SK-N-SH (cell line): ENCODE measurements at regions of chr7 and their contacts with region 1.

Region 1: GRCh38 chr7:2680792-2681490 is 7.1 kb upstream of the AMZ1 start:
- DNase-seq: peak; percentile 94
- H3K4me3 ChIP-seq: no peak overlapping the region; a peak in 1 of 4 replicates
- H3K27ac ChIP-seq: no peak overlapping the region
- H3K4me1 ChIP-seq: peaks cover 0 to 3% of the 10 kb centered on the region in 2 experiments; a peak in 1 of 4 replicates
- H3K27me3 ChIP-seq: peaks cover 11% of the 10 kb centered on the region; the same call in 1 of the 2 replicates
- CTCF ChIP-seq: peak; percentile 76
- EP300 ChIP-seq: no peak
- RAD21 ChIP-seq: peak; percentile 82

Region 2: GRCh38 chr7:2567679-2568278 is 113.2 kb before region 1 on chr7:
- CTCF ChIA-PET with region 1: interaction called, 14 read pairs
- POLR2A ChIA-PET with region 1: no interaction called
- DNase-seq: peak; percentile 69
- H3K4me3 ChIP-seq: no peak overlapping the region
- H3K27ac ChIP-seq: no peak overlapping the region
- H3K4me1 ChIP-seq: no peaks in the 10 kb centered on the region
- H3K27me3 ChIP-seq: no peaks in the 10 kb centered on the region
- CTCF ChIP-seq: peak; percentile 46
- EP300 ChIP-seq: no peak
- RAD21 ChIP-seq: peak; percentile 82

Region 3: DNA sequence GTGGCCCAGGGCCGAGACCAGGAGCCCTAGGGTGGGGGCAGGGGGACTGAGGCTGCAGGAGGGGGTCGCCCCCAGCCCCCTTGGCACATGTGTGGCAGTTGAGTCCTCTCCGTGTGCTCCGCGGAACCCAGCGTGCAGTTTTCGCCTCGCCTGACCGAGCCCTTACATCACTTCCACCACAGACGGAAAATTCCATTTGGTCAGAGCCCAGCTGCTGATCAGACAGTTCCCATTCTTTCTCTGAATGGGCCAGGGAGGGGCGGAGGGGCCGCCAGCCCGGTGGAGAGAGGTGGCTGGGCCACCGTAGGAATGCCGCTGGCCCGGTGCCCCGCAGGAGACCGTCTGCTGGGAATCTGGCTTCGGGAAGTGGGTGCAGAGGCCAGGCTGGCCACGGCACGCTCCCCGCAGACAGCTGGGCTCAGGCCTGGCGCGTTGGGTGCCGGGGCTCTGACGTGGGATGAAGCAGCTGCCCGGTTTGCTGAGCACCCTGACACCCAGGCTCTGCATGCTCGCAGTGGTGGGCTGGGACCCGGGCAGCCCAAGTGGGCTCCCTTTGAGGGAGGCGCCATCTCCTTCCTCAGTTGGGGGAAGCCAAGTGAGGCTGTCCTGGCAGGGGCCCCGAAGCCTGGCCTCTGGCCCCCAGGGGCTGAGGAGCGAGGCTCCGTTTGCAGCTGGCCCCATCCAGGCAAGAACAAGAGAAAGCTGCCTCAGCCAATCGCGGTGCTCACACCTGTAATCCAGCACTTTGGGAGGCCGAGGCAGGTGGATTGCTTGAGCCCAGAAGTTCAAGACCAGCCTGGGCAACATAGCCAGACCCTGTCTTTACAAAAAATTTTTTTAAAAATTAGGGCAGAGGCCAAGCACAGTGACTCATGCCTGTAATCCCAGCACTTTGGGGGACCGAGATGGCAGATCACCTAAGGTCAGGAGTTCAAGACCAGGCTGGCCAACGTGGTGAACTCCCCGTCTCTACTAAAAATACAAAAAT is 39.2 kb before region 1 on chr7:
- CTCF ChIA-PET with region 1: interaction called, 11 read pairs
- POLR2A ChIA-PET with region 1: no interaction called
- DNase-seq: peak; percentile 75
- H3K4me3 ChIP-seq: no peak overlapping the region
- H3K27ac ChIP-seq: peak overlapping the region; percentile 71 to 95
- H3K4me1 ChIP-seq: peaks cover 61 to 91% of the 10 kb centered on the region in 2 experiments
- H3K27me3 ChIP-seq: no peaks in the 10 kb centered on the region
- CTCF ChIP-seq: no peak
- EP300 ChIP-seq: peak; percentile 40 to 82; a peak in 2 of 4 replicates
- RAD21 ChIP-seq: no peak

Region 4: DNA sequence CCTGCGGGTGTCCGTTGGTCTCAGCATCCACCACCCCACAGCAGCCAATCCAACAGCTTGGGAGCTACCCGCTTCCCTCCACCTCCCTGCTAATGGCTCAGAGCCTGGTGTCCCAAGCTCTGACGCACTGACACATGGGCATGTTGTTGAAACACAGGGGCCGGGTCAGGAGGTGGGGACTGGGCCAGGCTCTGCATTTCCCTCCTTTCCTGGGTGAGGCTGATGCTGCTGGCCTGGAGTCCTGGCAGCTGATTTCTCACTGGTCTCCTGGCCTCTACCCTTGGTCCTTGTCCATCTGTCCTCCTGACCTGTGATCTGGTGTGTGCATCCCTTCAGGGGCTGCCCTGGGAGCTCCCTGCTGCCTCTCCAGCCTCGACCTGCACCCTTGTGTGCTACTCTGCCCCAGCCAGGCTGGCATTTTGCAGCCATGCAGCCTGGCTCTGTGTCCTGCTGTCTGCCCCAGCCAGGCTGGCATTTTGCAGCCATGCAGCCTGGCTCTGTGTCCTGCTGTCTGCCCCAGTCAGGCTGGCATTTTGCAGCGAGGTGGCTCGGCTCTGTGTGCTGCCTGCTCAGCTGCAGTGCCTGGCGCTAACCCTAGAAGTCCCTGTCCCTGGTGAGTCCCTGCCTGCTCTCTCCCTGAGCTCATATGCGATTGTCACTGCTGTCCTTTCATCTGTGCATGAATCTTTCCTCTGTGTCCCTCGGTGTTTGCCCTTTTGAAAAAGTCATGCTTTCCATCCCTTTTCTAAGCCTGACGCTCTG is 21.1 kb after region 1 on chr7:
- CTCF ChIA-PET with region 1: interaction called, 55 read pairs
- POLR2A ChIA-PET with region 1: interaction called, 3 read pairs
- DNase-seq: peak; percentile 66
- H3K4me3 ChIP-seq: no peak overlapping the region
- H3K27ac ChIP-seq: no peak overlapping the region
- H3K4me1 ChIP-seq: peaks cover 0 to 2% of the 10 kb centered on the region in 2 experiments; a peak in 1 of 4 replicates
- H3K27me3 ChIP-seq: peaks cover 6% of the 10 kb centered on the region; the same call in 1 of the 2 replicates
- CTCF ChIP-seq: no peak
- EP300 ChIP-seq: no peak
- RAD21 ChIP-seq: no peak

Region 5: DNA sequence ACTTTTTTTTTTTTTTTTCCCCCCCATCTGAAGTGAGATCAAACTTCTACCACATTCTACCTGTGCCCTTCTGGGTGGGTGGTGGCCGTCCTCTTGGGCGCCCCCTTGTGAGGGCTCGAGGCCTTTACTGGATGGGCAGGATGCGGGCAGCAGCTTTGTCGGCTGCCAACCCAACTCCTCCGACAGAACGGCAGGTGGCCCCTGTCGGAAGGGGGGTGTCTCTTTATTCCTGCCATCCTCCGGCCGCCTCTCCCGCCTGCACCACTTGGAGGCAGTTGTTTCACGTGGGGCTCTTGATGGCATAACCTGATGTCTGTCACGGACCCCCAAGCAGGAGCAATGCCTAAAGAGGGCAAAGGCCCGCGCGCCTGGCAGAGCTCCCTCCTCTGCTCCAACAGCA is 38.1 kb after region 1 on chr7:
- CTCF ChIA-PET with region 1: interaction called, 55 read pairs
- POLR2A ChIA-PET with region 1: no interaction called
- DNase-seq: peak; percentile 89
- H3K4me3 ChIP-seq: no peak overlapping the region
- H3K27ac ChIP-seq: no peak overlapping the region
- H3K4me1 ChIP-seq: peaks cover 0 to 27% of the 10 kb centered on the region in 2 experiments; a peak in 1 of 4 replicates
- H3K27me3 ChIP-seq: no peaks in the 10 kb centered on the region
- CTCF ChIP-seq: peak; percentile 66
- EP300 ChIP-seq: no peak
- RAD21 ChIP-seq: peak; percentile 46